B cell (primary cell): ENCODE measurements at regions of chr6 and their contacts with region 1.

Region 1: DNA sequence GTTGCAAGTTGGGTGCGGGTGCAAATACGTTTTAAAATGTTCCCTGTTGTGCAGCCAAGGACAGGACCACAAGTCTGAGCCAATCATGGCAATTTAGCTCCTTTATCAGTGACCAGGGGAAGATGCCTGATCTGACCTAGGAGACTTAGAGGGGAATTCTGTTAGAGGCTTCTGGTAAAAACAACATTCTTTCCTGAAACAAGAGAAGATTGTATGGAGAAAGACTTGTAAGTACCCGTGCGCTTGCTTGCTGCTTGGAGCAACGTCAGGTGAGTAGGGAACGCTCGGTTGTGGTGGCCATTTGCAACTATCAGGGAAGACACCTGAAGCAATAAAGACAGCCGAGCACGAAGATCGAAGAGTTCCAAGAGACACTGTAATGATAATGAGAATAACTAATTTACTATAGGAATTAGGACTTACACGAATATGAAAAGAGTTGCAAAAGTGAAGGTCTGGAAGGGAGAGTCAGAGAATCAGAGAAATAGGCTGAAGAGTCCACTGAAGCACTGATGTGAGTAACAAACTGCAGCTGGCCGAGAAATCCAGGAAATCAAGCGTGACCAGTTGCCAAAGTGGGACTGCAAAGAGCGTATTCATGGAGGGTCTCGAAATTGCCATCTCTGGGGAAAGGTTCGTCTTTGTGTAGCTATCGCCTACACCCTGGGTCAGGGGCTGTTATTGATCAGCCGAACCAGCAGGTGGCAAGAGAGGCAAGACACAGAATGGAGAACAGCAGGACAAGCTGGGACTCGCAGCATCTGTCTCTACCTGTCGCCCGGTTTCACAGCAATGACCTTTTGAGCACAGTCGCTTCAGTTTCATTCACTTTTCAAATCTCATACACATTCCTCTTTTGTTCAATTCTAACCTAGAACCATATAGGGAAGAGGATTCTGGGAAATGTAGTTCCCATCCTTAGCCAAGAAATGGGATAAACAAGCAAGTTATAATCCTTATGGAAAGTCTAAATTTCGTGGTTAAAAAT is 26.1 kb downstream of the LOC128125822 start:
- DNase-seq: peak; percentile 84
- ATAC-seq: peak; percentile 100
- H3K4me3 ChIP-seq: peak overlapping the region; percentile 38 to 62 (median 53)
- H3K4me3 Mint-ChIP-seq: peak overlapping the region; percentile 92
- H3K27ac ChIP-seq: no peak overlapping the region
- H3K27ac Mint-ChIP-seq: peak overlapping the region; percentile 43
- H3K4me1 ChIP-seq: peaks cover 8 to 11% of the 10 kb centered on the region in 2 donors
- H3K4me1 Mint-ChIP-seq: peaks cover 15% of the 10 kb centered on the region
- H3K27me3 ChIP-seq: peaks cover 0 to 3% (median 0%) of the 10 kb centered on the region in 4 experiments
- H3K27me3 Mint-ChIP-seq: no peaks in the 10 kb centered on the region
- CTCF ChIP-seq: peak; percentile 88

Region 2: GRCh38 chr6:63352587-63353285 is 245.6 kb before region 1 on chr6:
- CTCF ChIA-PET with region 1: interaction called, 24 read pairs
- POLR2A ChIA-PET with region 1: no interaction called
- intact Hi-C with region 1: no loop called
- DNase-seq: peak; percentile 80
- ATAC-seq: peak; percentile 81
- H3K4me3 ChIP-seq: peak overlapping the region; percentile 5 to 45 (median 14)
- H3K4me3 Mint-ChIP-seq: peak overlapping the region; percentile 65
- H3K27ac ChIP-seq: peak overlapping the region; percentile 38 to 56
- H3K27ac Mint-ChIP-seq: peak overlapping the region; percentile 80
- H3K4me1 ChIP-seq: peaks cover 13 to 18% of the 10 kb centered on the region in 2 donors
- H3K4me1 Mint-ChIP-seq: peaks cover 18% of the 10 kb centered on the region
- H3K27me3 ChIP-seq: no peaks in the 10 kb centered on the region
- H3K27me3 Mint-ChIP-seq: no peaks in the 10 kb centered on the region
- CTCF ChIP-seq: no peak

Region 3: GRCh38 chr6:63571881-63572732 is 26.2 kb before region 1 on chr6 and contains the starts of genes LOC128125822 and PTP4A1:
- CTCF ChIA-PET with region 1: interaction called, 22 read pairs
- POLR2A ChIA-PET with region 1: no interaction called
- intact Hi-C with region 1: loop called (anchors 1 kb)
- DNase-seq: peak; percentile 99
- ATAC-seq: peak; percentile 84
- H3K4me3 ChIP-seq: peak within 1 kb of the TSS; percentile 85 to 94 (median 88)
- H3K4me3 Mint-ChIP-seq: peak within 1 kb of the TSS; percentile 87
- H3K27ac ChIP-seq: peak within 1 kb of the TSS; percentile 98 to 99
- H3K27ac Mint-ChIP-seq: peak within 1 kb of the TSS; percentile 100
- H3K4me1 ChIP-seq: peaks cover 16 to 19% of the 10 kb centered on the region in 2 donors
- H3K4me1 Mint-ChIP-seq: peaks cover 31% of the 10 kb centered on the region
- H3K27me3 ChIP-seq: peaks cover 0 to 2% (median 0%) of the 10 kb centered on the region in 4 experiments
- H3K27me3 Mint-ChIP-seq: no peaks in the 10 kb centered on the region
- CTCF ChIP-seq: no peak
- total RNA-seq, gene PTP4A1: 33.7 and 39.5 TPM in 2 replicates

Region 4: DNA sequence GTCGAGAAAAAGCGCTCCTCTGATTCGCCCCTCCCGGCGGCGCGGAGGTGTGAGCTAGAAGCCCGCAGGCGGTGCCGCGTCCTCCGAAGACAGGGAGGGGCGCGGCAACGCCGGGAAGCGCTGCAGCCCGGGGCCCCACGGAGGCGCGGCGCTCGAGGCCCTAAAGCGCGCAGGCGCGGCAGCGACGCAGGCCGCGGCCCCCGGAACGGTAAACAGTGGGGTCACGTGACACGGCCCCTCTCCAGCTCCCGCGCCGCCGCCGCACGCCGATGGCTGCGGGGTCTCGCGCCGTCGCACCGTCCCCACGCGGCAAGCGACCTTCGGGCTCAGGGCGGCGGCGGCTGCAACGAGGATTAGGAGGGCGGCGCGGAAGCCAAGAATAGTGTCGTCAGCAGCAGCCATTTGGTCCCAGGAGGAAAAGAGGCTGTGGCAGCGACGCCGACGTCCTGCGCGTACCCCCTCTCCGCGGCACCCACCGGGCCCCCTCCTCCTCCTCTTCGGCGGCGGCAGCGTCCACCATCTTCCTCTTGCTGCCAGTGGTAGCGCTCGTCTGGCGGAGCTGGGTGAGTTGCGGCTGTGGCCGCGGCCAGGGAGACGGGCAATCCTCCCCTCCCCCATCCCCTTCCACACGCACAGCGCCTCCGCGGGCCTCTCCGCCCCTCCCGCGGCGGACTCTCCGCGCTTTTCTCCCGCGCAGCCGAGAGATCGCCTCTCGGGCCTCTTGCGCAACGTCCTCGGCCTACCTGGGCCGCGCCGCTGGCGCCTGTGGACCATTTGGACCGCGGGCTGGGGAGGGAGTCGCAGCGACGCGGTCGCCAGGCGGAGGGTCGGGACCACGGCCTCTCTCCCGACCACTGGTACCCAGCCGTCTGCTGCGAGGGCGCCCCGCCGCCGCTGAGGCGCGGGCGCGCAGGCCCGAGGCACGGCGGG is 37.5 kb after region 1 on chr6 and contains the start of gene PHF3:
- CTCF ChIA-PET with region 1: interaction called, 25 read pairs
- POLR2A ChIA-PET with region 1: interaction called, 5 read pairs
- intact Hi-C with region 1: loop called (anchors 1 kb)
- DNase-seq: peak; percentile 97
- ATAC-seq: peak; percentile 87
- H3K4me3 ChIP-seq: peak within 1 kb of the TSS; percentile 66 to 92 (median 86)
- H3K4me3 Mint-ChIP-seq: peak within 1 kb of the TSS; percentile 99
- H3K27ac ChIP-seq: peak within 1 kb of the TSS; percentile 92 to 98
- H3K27ac Mint-ChIP-seq: peak within 1 kb of the TSS; percentile 96
- H3K4me1 ChIP-seq: peaks cover 14 to 38% of the 10 kb centered on the region in 2 donors
- H3K4me1 Mint-ChIP-seq: peaks cover 47% of the 10 kb centered on the region
- H3K27me3 ChIP-seq: no peaks in the 10 kb centered on the region
- H3K27me3 Mint-ChIP-seq: peaks cover 3% of the 10 kb centered on the region
- CTCF ChIP-seq: no peak
- total RNA-seq, gene PHF3: 109 and 111 TPM in 2 replicates

Region 5: GRCh38 chr6:63764318-63764916 is 166.1 kb after region 1 on chr6:
- CTCF ChIA-PET with region 1: interaction called, 239 read pairs
- POLR2A ChIA-PET with region 1: no interaction called
- intact Hi-C with region 1: loop called (anchors 1 kb)
- DNase-seq: peak; percentile 67
- ATAC-seq: no peak
- H3K4me3 ChIP-seq: no peak overlapping the region
- H3K4me3 Mint-ChIP-seq: no peak overlapping the region
- H3K27ac ChIP-seq: no peak overlapping the region
- H3K27ac Mint-ChIP-seq: no peak overlapping the region
- H3K4me1 ChIP-seq: no peaks in the 10 kb centered on the region
- H3K4me1 Mint-ChIP-seq: no peaks in the 10 kb centered on the region
- H3K27me3 ChIP-seq: peaks cover 0 to 4% (median 0%) of the 10 kb centered on the region in 4 experiments
- H3K27me3 Mint-ChIP-seq: peaks cover 11% of the 10 kb centered on the region
- CTCF ChIP-seq: peak; percentile 83

Region 6: DNA sequence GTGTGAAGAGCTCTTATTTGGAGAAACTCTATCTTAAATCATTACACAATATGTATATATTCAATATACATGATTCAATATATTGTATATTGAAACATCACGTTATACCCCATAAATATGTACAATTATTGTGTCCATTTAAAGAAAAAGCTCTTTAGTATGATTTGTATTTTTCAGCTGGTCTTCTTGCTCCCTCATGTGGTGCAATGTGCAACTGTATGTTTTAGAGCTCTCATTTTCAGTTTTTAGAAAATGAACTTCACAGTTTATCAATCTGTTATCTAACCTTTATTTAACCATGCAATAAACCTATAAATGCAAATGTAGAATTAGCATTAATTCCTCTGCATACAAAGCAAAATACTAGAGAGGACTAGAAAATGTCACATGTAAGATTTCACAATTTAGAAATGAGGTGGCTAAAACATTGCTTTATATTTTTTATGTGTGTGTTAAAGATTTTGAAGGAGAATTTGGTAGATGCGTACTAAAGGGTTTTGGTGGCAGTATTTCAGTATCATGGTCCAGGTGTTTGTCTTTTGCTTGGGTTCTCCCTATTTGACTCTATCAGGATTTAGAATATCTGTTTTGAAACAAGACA is 204.4 kb after region 1 on chr6:
- CTCF ChIA-PET with region 1: interaction called, 13 read pairs
- POLR2A ChIA-PET with region 1: no interaction called
- intact Hi-C with region 1: loop called (anchors 1 kb)
- DNase-seq: no peak
- ATAC-seq: no peak
- H3K4me3 ChIP-seq: no peak overlapping the region
- H3K4me3 Mint-ChIP-seq: no peak overlapping the region
- H3K27ac ChIP-seq: no peak overlapping the region
- H3K27ac Mint-ChIP-seq: no peak overlapping the region
- H3K4me1 ChIP-seq: no peaks in the 10 kb centered on the region
- H3K4me1 Mint-ChIP-seq: no peaks in the 10 kb centered on the region
- H3K27me3 ChIP-seq: no peaks in the 10 kb centered on the region
- H3K27me3 Mint-ChIP-seq: peaks cover 4% of the 10 kb centered on the region
- CTCF ChIP-seq: peak; percentile 47